ENCODE measurements at regions of chr3 and their contacts with region 1.

Region 1: DNA sequence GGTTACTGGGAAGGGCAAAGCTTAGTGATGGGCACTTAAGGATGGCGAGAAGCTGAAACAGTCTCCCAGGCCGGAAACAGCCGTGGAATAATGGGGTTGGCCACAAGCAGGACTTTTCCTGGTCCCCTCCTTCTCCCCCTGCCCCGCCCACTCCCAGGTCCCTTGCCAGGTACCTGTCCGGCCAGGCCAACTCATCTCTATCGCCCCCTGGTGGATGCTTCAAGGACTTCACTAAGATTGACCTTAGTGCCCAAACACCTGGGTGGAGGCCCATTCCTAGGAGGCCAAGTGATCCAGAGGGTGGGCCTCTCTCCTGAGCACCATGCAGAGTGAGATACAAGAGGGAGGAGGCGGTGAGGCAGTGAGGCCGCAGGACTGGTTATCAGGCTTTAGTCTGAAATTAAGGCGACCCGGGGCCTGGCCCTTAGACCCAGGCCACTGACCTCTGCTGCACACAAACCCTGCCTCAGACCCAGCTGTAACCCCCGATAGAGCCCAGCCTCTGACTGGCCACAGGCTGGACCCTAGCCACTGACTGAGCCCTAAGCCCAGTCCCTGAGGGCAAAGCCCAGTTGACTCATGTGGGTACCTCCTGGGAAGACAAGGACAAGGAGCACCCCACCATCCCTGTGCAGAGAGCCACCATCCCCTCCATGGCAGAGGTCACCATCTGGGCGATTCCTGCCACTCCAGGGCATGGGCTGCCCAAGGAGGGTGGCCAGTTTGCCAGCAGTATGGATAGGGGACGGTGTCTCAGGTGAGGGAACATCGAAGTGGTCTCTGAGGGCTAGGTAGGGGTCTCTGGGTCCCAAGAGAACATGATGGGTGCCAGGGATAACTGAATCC is 37.6 kb downstream of the VIPR1 start:
- DNase-seq: peak; percentile 76
- H3K4me3 Mint-ChIP-seq: no peak overlapping the region
- H3K27ac Mint-ChIP-seq: no peak overlapping the region
- H3K4me1 Mint-ChIP-seq: peaks cover 7% of the 10 kb centered on the region
- H3K27me3 Mint-ChIP-seq: no peaks in the 10 kb centered on the region

Region 2: GRCh38 chr3:42247576-42248027 is 292.5 kb before region 1 on chr3:
- CTCF ChIA-PET with region 1: interaction called, 15 read pairs
- POLR2A ChIA-PET with region 1: no interaction called
- intact Hi-C with region 1: loop called (anchors 5 kb)
- DNase-seq: peak; percentile 73
- H3K4me3 Mint-ChIP-seq: no peak overlapping the region
- H3K27ac Mint-ChIP-seq: no peak overlapping the region
- H3K4me1 Mint-ChIP-seq: peaks cover 7% of the 10 kb centered on the region
- H3K27me3 Mint-ChIP-seq: peaks cover 9% of the 10 kb centered on the region

Region 3: GRCh38 chr3:42376344-42376798 is 163.7 kb before region 1 on chr3:
- CTCF ChIA-PET with region 1: no interaction called
- POLR2A ChIA-PET with region 1: no interaction called
- intact Hi-C with region 1: no loop called
- DNase-seq: peak; percentile 81
- H3K4me3 Mint-ChIP-seq: no peak overlapping the region
- H3K27ac Mint-ChIP-seq: no peak overlapping the region
- H3K4me1 Mint-ChIP-seq: no peaks in the 10 kb centered on the region
- H3K27me3 Mint-ChIP-seq: peaks cover 8% of the 10 kb centered on the region

Region 4: GRCh38 chr3:42518800-42519567 is 21.1 kb before region 1 on chr3:
- CTCF ChIA-PET with region 1: interaction called, 7 read pairs
- POLR2A ChIA-PET with region 1: interaction called, 3 read pairs
- intact Hi-C with region 1: loop called (anchors 1 kb)
- DNase-seq: peak; percentile 61
- H3K4me3 Mint-ChIP-seq: no peak overlapping the region
- H3K27ac Mint-ChIP-seq: peak overlapping the region; percentile 81
- H3K4me1 Mint-ChIP-seq: peaks cover 29% of the 10 kb centered on the region
- H3K27me3 Mint-ChIP-seq: no peaks in the 10 kb centered on the region

Region 5: DNA sequence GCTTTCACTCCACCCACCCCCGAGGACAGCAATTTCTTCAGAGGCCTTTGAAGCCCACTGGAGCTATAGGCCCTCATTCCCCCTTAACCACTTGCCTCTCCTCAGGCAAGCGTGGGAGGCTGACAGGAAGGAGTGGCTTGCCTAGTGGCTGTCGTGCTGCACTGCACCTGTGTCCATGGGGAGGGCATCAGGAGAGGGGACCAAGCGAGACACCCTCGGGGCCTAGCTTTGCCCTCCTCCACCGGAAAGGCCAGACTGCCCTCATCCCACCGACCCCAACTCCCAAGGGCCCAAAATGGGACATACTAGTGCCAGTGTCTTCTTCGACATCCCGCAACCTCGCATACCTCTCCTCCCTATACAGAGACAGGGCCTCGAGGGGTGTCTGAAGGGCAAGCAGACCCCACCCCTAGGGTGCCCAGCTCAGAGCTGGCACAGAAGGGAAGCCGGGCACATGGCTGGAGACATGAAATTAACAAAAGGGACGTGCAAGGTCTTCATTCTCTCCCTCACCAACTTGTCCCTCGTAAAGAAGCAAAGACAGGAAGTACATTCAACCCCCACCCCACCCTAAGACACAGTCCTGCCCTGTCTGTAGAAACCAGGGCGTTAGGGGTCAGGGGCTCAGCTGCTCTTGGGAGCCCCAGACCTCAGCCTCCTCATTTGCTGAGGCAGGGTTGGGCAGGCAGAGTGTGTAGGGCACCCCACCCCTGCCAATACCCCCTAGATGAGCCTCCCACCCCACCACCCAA is 13.3 kb before region 1 on chr3:
- CTCF ChIA-PET with region 1: interaction called, 10 read pairs
- POLR2A ChIA-PET with region 1: no interaction called
- intact Hi-C with region 1: no loop called
- DNase-seq: peak; percentile 73
- H3K4me3 Mint-ChIP-seq: no peak overlapping the region
- H3K27ac Mint-ChIP-seq: peak overlapping the region; percentile 71
- H3K4me1 Mint-ChIP-seq: peaks cover 56% of the 10 kb centered on the region
- H3K27me3 Mint-ChIP-seq: no peaks in the 10 kb centered on the region

Region 6: GRCh38 chr3:42569593-42570142 is 29.6 kb after region 1 on chr3:
- CTCF ChIA-PET with region 1: no interaction called
- POLR2A ChIA-PET with region 1: no interaction called
- intact Hi-C with region 1: no loop called
- DNase-seq: no peak
- H3K4me3 Mint-ChIP-seq: no peak overlapping the region
- H3K27ac Mint-ChIP-seq: no peak overlapping the region
- H3K4me1 Mint-ChIP-seq: peaks cover 6% of the 10 kb centered on the region
- H3K27me3 Mint-ChIP-seq: no peaks in the 10 kb centered on the region

Measured in activated CD4-positive, alpha-beta memory T cell treated with anti-CD3 and anti-CD28 coated beads for 36 hours (primary cell).